ENCODE measurements at regions of chr7 and their contacts with region 1.

Region 1: DNA sequence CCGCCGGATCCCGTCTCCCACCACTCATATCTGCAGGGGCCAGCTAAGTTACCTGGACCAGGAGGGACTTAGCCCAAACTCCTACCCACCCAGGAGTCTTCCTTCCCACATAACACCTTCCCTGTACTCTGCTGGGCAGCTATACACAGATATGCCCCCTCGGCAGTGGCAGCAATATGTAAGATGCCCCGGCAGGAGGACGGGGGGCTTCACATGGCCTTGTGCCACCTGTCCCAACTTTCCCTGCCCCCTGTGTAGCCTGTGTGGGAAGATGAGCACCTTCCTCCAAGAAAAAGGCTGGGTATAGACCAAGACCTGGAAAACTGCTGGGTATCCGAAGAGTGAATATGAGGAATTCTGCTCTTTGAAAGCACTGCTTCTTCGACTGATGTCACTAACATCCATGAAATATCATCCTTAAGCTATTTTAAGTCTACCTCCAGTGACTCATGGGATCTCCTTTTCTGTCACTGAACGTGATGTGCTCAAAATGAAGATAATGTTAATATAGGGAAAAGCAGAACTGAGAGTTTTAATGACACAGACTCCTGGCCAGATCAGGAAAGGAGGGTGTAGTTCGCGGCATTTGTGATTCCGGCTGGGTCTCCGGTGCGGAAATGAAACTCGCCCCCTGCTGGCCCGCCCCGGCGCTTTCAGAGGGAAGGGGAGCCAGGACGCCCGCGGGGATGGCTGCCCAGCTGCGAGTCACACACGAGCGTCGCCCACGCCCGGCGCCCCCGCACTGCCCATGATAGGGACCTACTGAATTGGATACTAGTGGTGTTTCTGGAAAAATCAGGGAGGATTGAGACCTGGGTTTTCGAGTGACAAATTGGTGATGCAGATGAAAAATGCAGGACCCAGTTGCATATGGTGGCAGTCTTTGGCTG is 256.9 kb upstream of the NFE2L3 start:
- DNase-seq: peak; percentile 63
- ATAC-seq: peak; percentile 79
- H3K4me3 ChIP-seq: peak overlapping the region; percentile 58
- H3K27ac ChIP-seq: peak overlapping the region; percentile 59
- H3K4me1 ChIP-seq: peaks cover 29% of the 10 kb centered on the region
- H3K27me3 ChIP-seq: no peaks in the 10 kb centered on the region; a peak in 1 of 4 replicates
- CTCF ChIP-seq: peak; percentile 59 to 81 (median 77)
- EP300 ChIP-seq: peak; percentile 81 to 93
- POLR2A ChIP-seq: no peak
- RAD21 ChIP-seq: peak; percentile 53

Region 2: DNA sequence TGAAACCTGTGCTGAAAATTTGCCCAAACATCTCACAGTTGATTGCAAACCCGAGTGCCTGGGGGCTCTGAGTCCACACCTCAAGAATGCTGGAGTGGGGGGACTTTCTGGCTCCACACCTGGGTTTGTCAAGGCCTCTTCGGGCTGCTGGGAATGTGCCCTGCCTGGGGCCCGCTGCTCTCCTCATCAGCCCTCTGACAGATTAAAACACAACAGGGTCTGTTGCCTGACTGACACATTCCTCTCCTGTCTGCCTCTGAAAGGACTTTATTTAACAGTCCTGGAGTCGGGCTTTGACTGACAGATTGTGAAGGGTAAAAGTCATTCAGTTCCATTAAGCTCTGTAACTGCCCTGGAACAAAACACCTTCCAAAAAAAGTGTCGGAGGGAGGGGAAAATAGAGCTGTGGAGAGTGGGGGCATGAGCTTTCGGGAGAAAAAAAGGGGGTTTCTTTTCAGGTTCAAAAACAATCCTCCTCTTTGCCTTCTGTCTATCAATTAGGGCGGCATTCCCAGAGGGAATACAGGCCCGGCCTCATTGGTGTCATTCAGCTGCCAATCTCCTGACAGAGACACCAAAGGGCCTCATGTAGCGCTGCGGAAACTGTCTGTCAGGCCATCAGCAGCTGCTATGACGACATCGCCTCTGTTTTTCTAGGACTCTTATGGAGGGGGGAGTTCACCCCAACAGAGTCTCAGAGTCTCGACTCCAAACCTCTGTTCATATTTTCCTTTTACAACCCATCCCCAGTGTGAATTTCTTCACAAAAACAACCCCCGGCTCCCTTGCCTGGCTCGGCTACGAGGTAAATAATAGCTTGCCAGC is 142.0 kb before region 1 on chr7:
- CTCF ChIA-PET with region 1: no interaction called
- POLR2A ChIA-PET with region 1: no interaction called
- RAD21 ChIA-PET with region 1: no interaction called
- SMC1A ChIA-PET with region 1: no interaction called
- in situ Hi-C with region 1: no loop called
- intact Hi-C with region 1: no loop called
- DNase-seq: no peak
- ATAC-seq: no peak
- H3K4me3 ChIP-seq: no peak overlapping the region
- H3K27ac ChIP-seq: no peak overlapping the region
- H3K4me1 ChIP-seq: no peaks in the 10 kb centered on the region
- H3K27me3 ChIP-seq: peaks cover 2 to 5% of the 10 kb centered on the region in 2 experiments; a peak in 3 of 4 replicates
- CTCF ChIP-seq: no peak
- EP300 ChIP-seq: no peak
- POLR2A ChIP-seq: no peak
- RAD21 ChIP-seq: no peak

Region 3: GRCh38 chr7:25877802-25878789 is 17.1 kb before region 1 on chr7:
- CTCF ChIA-PET with region 1: interaction called, 13 read pairs
- POLR2A ChIA-PET with region 1: interaction called, 3 read pairs
- RAD21 ChIA-PET with region 1: interaction called, 7 read pairs
- SMC1A ChIA-PET with region 1: interaction called, 13 read pairs
- in situ Hi-C with region 1: no loop called
- intact Hi-C with region 1: no loop called
- DNase-seq: no peak
- ATAC-seq: peak; percentile 93
- H3K4me3 ChIP-seq: no peak overlapping the region
- H3K27ac ChIP-seq: no peak overlapping the region
- H3K4me1 ChIP-seq: no peaks in the 10 kb centered on the region
- H3K27me3 ChIP-seq: peaks cover 0 to 2% of the 10 kb centered on the region in 2 experiments; a peak in 2 of 4 replicates
- CTCF ChIP-seq: no peak
- EP300 ChIP-seq: peak in 1 of 2 experiments; percentile 17; a peak in 1 of 4 replicates
- POLR2A ChIP-seq: no peak
- RAD21 ChIP-seq: no peak

Region 4: GRCh38 chr7:25959168-25959734 is 64.1 kb after region 1 on chr7:
- CTCF ChIA-PET with region 1: interaction called, 29 read pairs
- POLR2A ChIA-PET with region 1: no interaction called
- RAD21 ChIA-PET with region 1: interaction called, 10 read pairs
- SMC1A ChIA-PET with region 1: interaction called, 45 read pairs
- in situ Hi-C with region 1: no loop called
- intact Hi-C with region 1: no loop called
- DNase-seq: no peak
- ATAC-seq: peak; percentile 41
- H3K4me3 ChIP-seq: no peak overlapping the region
- H3K27ac ChIP-seq: no peak overlapping the region
- H3K4me1 ChIP-seq: peaks cover 32% of the 10 kb centered on the region
- H3K27me3 ChIP-seq: no peaks in the 10 kb centered on the region
- CTCF ChIP-seq: no peak
- EP300 ChIP-seq: no peak
- POLR2A ChIP-seq: no peak
- RAD21 ChIP-seq: no peak

Region 5: GRCh38 chr7:26071622-26072456 is 176.7 kb after region 1 on chr7:
- CTCF ChIA-PET with region 1: interaction called, 264 read pairs
- POLR2A ChIA-PET with region 1: interaction called, 3 read pairs
- RAD21 ChIA-PET with region 1: interaction called, 3 read pairs
- SMC1A ChIA-PET with region 1: interaction called, 23 read pairs
- in situ Hi-C with region 1: no loop called
- intact Hi-C with region 1: no loop called
- DNase-seq: no peak
- ATAC-seq: no peak
- H3K4me3 ChIP-seq: no peak overlapping the region
- H3K27ac ChIP-seq: no peak overlapping the region
- H3K4me1 ChIP-seq: no peaks in the 10 kb centered on the region
- H3K27me3 ChIP-seq: peaks cover 2 to 3% of the 10 kb centered on the region in 2 experiments; a peak in 2 of 4 replicates
- CTCF ChIP-seq: no peak
- EP300 ChIP-seq: no peak
- POLR2A ChIP-seq: no peak
- RAD21 ChIP-seq: no peak

Region 6: GRCh38 chr7:26167301-26167934 is 272.3 kb after region 1 on chr7:
- CTCF ChIA-PET with region 1: interaction called, 9 read pairs
- POLR2A ChIA-PET with region 1: no interaction called
- RAD21 ChIA-PET with region 1: no interaction called
- SMC1A ChIA-PET with region 1: interaction called, 13 read pairs
- in situ Hi-C with region 1: no loop called
- intact Hi-C with region 1: no loop called
- DNase-seq: no peak
- ATAC-seq: peak; percentile 94
- H3K4me3 ChIP-seq: 0 out of 2 replicates have a peak overlapping the region, but pooled peaks have one; percentile 31
- H3K27ac ChIP-seq: peak overlapping the region; percentile 43
- H3K4me1 ChIP-seq: peaks cover 17% of the 10 kb centered on the region
- H3K27me3 ChIP-seq: no peaks in the 10 kb centered on the region
- CTCF ChIP-seq: no peak
- EP300 ChIP-seq: no peak
- POLR2A ChIP-seq: no peak
- RAD21 ChIP-seq: no peak

Region 7: GRCh38 chr7:26284995-26285632 is 390.0 kb after region 1 on chr7:
- CTCF ChIA-PET with region 1: interaction called, 23 read pairs
- POLR2A ChIA-PET with region 1: no interaction called
- RAD21 ChIA-PET with region 1: interaction called, 18 read pairs
- SMC1A ChIA-PET with region 1: interaction called, 17 read pairs
- in situ Hi-C with region 1: no loop called
- intact Hi-C with region 1: loop called (anchors 5 kb)
- DNase-seq: no peak
- ATAC-seq: peak; percentile 80
- H3K4me3 ChIP-seq: no peak overlapping the region
- H3K27ac ChIP-seq: no peak overlapping the region
- H3K4me1 ChIP-seq: no peaks in the 10 kb centered on the region
- H3K27me3 ChIP-seq: no peaks in the 10 kb centered on the region
- CTCF ChIP-seq: peak in 2 of 3 experiments; percentile 29 to 30; a peak in 2 of 6 replicates
- EP300 ChIP-seq: no peak
- POLR2A ChIP-seq: no peak
- RAD21 ChIP-seq: peak; percentile 38; the same call in 1 of the 2 replicates

Region 8: GRCh38 chr7:26667500-26668133 is 772.5 kb after region 1 on chr7:
- CTCF ChIA-PET with region 1: interaction called, 8 read pairs
- POLR2A ChIA-PET with region 1: no interaction called
- RAD21 ChIA-PET with region 1: interaction called, 13 read pairs
- SMC1A ChIA-PET with region 1: interaction called, 9 read pairs
- in situ Hi-C with region 1: loop called (anchors 10 kb)
- intact Hi-C with region 1: loop called (anchors 2 kb)
- DNase-seq: peak; percentile 36
- ATAC-seq: peak; percentile 82
- H3K4me3 ChIP-seq: no peak overlapping the region
- H3K27ac ChIP-seq: no peak overlapping the region
- H3K4me1 ChIP-seq: no peaks in the 10 kb centered on the region
- H3K27me3 ChIP-seq: no peaks in the 10 kb centered on the region
- CTCF ChIP-seq: peak; percentile 64 to 91 (median 80); a peak in 5 of 6 replicates
- EP300 ChIP-seq: no peak
- POLR2A ChIP-seq: no peak
- RAD21 ChIP-seq: peak; percentile 78

Measured in GM12878 (cell line).